Activated naive CD8-positive, alpha-beta T cell treated with anti-CD3 and anti-CD28 coated beads, Interleukin-2, amount 10 ng/mL, durations not matched to agents 7 days and 5 days (primary cell): ENCODE measurements at regions of chr22 and their contacts with region 1.

Region 1: DNA sequence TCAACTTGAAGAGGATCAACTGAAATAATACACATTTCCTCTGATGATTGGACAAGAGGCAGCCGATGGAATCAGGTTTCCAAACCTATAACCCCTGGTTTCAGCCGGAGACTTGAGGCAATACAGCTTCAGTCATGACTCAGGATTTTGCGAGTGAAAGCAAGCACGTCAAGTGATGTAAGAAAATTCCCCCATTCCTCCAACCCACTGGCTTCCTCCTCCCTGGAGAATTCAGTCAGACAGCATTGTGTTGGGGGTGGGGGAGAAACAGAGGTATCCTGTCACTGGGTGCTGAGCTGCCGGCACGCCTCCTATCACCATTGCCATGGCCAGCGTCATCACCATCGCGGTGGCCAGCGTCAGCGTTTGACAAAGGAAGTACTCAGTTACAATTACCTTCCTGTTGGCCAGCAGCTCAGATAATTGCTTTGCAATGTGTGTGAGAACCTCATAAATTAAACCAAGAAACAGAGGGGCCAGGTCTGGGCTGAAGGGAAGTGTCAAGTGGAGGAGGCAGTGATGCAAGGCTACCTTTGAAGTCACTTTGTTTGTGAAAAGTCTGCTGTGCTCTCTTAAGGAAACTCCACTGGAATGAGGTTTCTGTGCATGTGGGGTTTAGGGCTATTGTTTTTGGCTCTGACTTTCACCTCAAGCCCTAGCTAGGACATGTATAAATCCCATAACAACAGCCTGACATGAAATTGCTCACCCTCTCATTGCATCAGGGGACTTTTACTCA is 50.2 kb downstream of the LIF start:
- DNase-seq: no peak
- ATAC-seq: peak; percentile 75
- H3K4me3 Mint-ChIP-seq: peak overlapping the region; percentile 61
- H3K27ac Mint-ChIP-seq: peak overlapping the region; percentile 94
- H3K4me1 Mint-ChIP-seq: peaks cover 69% of the 10 kb centered on the region
- H3K27me3 Mint-ChIP-seq: no peaks in the 10 kb centered on the region

Region 2: GRCh38 chr22:30183861-30184278 is 12.4 kb before region 1 on chr22:
- POLR2A ChIA-PET with region 1: interaction called, 34 read pairs
- DNase-seq: no peak
- ATAC-seq: peak; percentile 79
- H3K4me3 Mint-ChIP-seq: peak overlapping the region; percentile 64
- H3K27ac Mint-ChIP-seq: peak overlapping the region; percentile 95
- H3K4me1 Mint-ChIP-seq: peaks cover 84% of the 10 kb centered on the region
- H3K27me3 Mint-ChIP-seq: no peaks in the 10 kb centered on the region

Region 3: DNA sequence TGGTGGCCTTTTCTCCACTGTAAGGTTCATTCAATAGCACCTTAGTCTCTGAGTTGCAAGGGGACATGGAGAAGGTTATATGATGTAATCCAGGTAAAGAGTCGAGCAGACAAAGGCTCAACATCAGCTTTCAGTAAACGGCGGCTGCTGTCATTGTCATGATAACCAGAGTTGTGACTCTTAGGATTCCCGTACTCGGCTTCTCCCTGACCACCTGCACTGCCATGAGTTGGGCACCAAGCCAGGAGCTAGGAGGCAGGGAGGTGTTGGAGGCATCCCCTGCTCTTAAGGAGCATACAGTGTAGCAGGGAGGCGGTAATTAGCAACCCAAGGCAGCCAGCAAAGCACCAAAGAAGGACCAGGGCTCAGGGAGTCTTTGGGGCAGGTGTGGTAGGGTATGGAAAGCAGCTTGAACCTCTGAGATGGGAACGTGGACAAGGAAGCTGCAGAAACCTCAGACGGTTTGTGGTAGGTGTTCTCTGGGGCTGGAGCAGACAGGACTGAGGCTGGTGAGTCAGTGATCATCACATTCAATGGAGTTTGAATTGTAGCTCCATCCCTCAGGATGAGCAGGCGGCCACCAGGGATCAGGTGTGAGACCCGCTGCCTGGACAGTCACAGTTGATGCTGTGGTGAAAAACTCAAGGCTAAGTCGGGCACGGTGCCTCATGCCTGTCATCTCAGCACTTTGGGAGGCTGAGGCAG is 18.5 kb after region 1 on chr22:
- POLR2A ChIA-PET with region 1: interaction called, 41 read pairs
- DNase-seq: no peak
- ATAC-seq: peak; percentile 38
- H3K4me3 Mint-ChIP-seq: peak overlapping the region; percentile 46
- H3K27ac Mint-ChIP-seq: peak overlapping the region; percentile 91
- H3K4me1 Mint-ChIP-seq: peaks cover 73% of the 10 kb centered on the region
- H3K27me3 Mint-ChIP-seq: no peaks in the 10 kb centered on the region

Region 4: GRCh38 chr22:30224161-30224857 is 28.0 kb after region 1 on chr22:
- POLR2A ChIA-PET with region 1: interaction called, 41 read pairs
- DNase-seq: no peak
- ATAC-seq: no peak
- H3K4me3 Mint-ChIP-seq: peak overlapping the region; percentile 23
- H3K27ac Mint-ChIP-seq: peak overlapping the region; percentile 97
- H3K4me1 Mint-ChIP-seq: peaks cover 91% of the 10 kb centered on the region
- H3K27me3 Mint-ChIP-seq: no peaks in the 10 kb centered on the region

Region 5: DNA sequence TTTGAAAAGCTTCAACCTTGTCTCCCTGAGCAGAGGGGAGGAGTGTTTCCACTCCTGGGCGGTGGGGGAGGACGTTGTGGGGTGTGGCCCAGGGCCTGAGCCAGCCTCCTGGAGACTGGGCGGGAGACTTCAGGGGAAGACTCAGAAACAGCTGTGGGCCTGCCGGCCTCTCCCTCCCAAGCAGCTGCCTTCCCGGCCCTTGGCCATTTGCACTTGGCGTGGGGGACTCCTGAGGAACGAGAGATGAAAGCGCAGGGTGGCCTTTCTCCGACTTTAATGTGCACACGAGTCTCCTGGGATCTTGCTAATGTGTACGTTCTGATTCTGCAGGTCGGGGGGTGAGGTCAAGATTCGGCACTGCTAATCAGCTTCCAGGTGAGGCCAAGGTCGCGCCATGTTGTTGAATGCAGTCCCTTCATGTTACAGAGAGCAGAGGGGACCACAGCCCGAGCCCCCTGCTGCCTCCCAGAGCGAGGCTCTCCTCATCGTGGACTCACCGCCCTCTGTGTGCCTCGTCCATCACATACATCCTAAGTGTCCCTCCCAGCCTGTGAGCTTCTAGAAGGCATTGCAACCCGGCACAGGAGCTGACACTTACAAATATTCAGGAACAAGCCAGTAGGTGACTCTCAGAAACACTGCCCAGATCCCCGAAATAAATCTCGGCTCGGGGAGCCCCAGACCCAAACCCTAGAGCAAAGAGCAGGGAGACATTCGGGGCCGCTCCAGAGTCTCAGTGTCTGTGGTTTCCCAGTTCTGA is 42.5 kb after region 1 on chr22:
- POLR2A ChIA-PET with region 1: interaction called, 247 read pairs
- DNase-seq: peak; percentile 67
- ATAC-seq: peak; percentile 38
- H3K4me3 Mint-ChIP-seq: peak overlapping the region; percentile 34
- H3K27ac Mint-ChIP-seq: peak overlapping the region; percentile 81
- H3K4me1 Mint-ChIP-seq: peaks cover 69% of the 10 kb centered on the region
- H3K27me3 Mint-ChIP-seq: no peaks in the 10 kb centered on the region